ENCODE measurements at regions of chr18 and their contacts with region 1.

Region 1: DNA sequence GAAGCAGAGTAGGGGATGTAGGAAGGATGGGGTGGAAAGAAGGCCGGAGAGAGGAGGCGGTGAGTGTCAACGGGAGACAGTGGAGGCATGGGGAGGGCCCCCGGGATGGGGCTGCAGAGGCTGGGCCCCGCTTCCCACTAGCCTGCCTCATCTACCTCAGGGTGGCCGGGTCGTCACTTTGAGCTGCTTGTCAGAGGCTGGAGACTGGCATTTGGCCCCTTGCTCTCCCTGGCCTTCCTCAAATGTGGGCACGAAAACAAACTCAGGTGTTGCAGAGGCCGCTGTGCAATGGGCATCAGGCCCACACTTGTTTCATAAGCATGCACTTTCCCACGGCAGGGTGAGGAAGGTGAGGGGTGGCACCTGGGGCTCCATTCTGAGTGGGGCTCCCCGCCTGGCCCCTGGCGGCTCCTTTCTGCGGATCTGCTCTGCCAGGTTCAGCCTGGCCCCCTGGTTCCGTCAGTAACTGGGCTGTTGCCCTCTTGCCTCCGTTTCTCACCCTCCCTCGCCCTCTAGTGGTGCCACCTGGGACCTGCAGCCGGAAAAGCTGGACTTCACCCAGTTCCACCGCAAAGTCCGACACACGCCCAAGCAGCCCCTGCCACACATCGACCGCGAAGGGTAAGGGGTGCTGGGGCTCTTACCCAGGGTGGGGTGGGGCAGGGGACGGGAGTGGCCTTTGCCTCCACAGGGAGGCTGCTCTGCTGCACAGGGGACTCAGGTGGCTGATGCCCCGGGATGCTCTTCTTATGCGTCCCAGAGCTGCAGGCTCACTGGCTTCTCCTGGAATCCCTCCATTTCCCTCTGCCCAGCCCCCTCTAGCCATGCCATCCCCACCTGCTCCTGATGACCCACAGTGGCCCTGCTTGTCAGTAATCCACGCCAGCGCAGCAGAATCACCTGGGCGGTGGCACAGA is 125.4 kb downstream of the CTIF start:
- DNase-seq: no peak
- ATAC-seq: peak; percentile 74
- H3K4me3 ChIP-seq: no peak overlapping the region
- H3K27ac ChIP-seq: no peak overlapping the region
- H3K4me1 ChIP-seq: peaks cover 9% of the 10 kb centered on the region
- H3K27me3 ChIP-seq: no peaks in the 10 kb centered on the region
- CTCF ChIP-seq: peak; percentile 82

Region 2: DNA sequence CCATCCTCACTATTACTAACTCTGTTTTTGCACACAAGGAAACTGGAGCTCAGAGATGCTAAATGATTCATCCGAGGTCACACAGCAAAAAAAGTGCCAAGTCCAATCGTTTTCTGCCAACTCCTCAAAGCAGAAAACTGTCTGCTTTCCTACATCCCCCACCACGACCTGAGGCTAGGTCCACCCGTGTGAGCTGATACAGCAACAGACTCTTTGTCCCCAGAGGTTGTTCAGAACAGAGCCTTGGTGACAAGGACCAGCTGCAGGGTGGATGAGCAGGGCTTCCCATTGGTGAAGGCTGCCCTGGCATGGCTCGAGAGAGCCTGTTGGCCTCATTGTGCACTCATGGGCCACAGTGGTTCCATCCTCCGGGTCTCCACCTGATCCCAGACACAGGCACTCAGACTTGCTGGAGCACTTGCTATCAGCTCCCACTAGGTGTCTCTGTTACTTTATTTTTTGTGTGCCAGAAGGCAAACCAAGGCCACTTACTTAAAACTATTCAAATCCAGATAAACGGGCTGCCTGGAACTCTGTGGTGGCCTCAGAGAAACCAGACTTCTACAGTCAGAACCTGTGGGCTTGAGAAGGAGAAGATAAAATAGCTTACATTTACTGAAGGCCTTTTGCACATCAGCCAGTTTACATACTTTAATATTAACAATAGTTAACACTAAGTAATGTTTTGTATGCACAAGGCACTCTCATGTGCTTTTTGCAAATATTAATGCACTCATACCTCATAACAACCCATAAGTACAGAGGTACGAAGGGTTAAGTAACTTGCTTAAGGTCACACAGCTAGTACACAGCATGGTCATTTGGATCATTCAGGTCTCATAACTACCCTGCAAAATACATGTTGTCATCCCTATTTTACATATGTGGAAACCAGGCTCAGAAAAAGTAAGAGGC is 188.3 kb before region 1 on chr18:
- CTCF ChIA-PET with region 1: interaction called, 4 read pairs
- POLR2A ChIA-PET with region 1: no interaction called
- in situ Hi-C with region 1: no loop called
- intact Hi-C with region 1: loop called (anchors 2 kb)
- DNase-seq: peak; percentile 64
- ATAC-seq: peak; percentile 98
- H3K4me3 ChIP-seq: no peak overlapping the region
- H3K27ac ChIP-seq: no peak overlapping the region
- H3K4me1 ChIP-seq: no peaks in the 10 kb centered on the region; the same call in none of the 2 replicates
- H3K27me3 ChIP-seq: no peaks in the 10 kb centered on the region
- CTCF ChIP-seq: peak; percentile 69

Region 3: GRCh38 chr18:48675352-48675761 is 11.2 kb after region 1 on chr18:
- CTCF ChIA-PET with region 1: no interaction called
- POLR2A ChIA-PET with region 1: no interaction called
- in situ Hi-C with region 1: no loop called
- intact Hi-C with region 1: no loop called
- DNase-seq: peak; percentile 42
- ATAC-seq: peak; percentile 97
- H3K4me3 ChIP-seq: no peak overlapping the region
- H3K27ac ChIP-seq: no peak overlapping the region
- H3K4me1 ChIP-seq: no peaks in the 10 kb centered on the region
- H3K27me3 ChIP-seq: no peaks in the 10 kb centered on the region
- CTCF ChIP-seq: peak; percentile 83

Region 4: DNA sequence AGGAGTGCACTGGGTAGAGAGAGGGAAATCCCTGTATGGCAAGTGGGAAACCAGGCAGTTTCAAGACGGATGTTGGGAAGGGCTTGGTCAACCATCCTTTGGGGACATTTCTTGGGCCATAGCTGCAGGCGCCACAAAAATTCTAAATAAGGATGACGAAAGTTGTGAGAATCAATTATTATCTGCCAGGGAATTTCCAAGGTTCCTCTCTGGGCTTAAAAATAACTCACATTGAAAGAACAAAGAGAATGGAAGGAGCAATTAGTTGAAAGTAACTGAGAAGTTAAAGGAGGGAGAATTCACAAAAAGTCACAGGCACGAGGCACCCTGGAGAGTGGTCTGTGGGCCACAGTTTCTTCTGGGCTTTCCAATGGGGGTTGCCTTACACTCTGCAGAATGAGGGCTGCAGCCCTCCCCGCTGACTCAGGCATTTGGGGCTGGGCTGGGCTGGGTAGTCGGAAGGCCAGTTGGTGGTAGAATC is 90.8 kb after region 1 on chr18:
- CTCF ChIA-PET with region 1: no interaction called
- POLR2A ChIA-PET with region 1: no interaction called
- in situ Hi-C with region 1: no loop called
- intact Hi-C with region 1: no loop called
- DNase-seq: no peak
- ATAC-seq: no peak
- H3K4me3 ChIP-seq: no peak overlapping the region
- H3K27ac ChIP-seq: no peak overlapping the region
- H3K4me1 ChIP-seq: no peaks in the 10 kb centered on the region
- H3K27me3 ChIP-seq: no peaks in the 10 kb centered on the region
- CTCF ChIP-seq: no peak

Region 5: DNA sequence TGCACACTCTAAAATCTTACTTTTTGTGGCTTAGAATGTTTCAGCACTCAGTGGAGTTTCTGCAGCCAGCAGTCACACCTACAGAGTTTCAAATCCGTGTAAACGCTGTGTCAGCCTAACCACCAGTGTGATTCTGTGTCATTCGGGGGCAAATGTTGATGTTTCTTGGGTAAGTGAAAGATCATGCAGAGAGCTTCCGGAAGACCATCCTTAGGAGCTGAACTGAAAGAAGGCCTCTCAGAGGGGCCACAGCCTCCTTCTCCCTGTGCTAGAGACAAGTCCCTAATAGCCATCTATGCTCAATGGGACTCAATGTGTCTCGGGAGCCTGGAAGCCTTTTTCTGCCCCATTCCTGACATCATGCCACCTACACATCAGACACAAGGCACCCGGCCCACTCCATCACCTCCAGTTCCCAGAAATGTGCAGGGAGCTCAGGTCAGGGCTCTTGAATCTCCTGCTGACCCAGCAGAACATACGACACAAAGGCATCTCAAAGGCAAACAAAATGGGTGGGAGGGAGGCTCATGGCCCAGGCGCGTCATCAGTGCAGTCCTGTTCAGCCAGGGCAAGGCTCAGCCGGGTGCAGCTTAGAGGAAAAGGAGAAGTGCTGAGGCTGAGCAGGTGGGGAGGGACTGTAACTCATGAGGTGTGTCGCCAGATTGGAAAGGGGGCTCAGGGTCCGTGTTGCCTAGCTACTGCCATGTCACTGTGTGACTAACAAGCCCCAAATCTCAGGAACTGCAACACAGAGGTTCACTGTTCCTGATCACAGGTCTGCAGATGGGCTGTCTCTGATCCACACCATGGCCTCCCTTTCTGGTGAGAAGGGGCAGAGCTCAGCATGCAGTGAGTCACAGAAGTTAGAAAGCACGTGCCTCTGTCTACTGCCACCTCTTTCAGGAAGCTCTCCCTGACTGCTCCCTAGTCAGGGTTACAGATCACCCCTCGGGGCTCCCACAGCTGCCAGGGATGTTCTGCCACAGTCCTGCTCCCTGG is 204.6 kb after region 1 on chr18:
- CTCF ChIA-PET with region 1: no interaction called
- POLR2A ChIA-PET with region 1: no interaction called
- in situ Hi-C with region 1: no loop called
- intact Hi-C with region 1: no loop called
- DNase-seq: no peak
- ATAC-seq: no peak
- H3K4me3 ChIP-seq: no peak overlapping the region
- H3K27ac ChIP-seq: no peak overlapping the region
- H3K4me1 ChIP-seq: peaks cover 20% of the 10 kb centered on the region
- H3K27me3 ChIP-seq: no peaks in the 10 kb centered on the region
- CTCF ChIP-seq: no peak

Measured in Panc1 (cell line).